ENCODE measurements at regions of chr3 and their contacts with region 1.

Region 1: GRCh38 chr3:169812332-169813235 is at the starts of genes LRRC34 and LRRIQ4:
- DNase-seq: peak; percentile 43 to 72 (median 52)
- ATAC-seq: peak; percentile 72
- H3K4me3 ChIP-seq: peak within 1 kb of the TSS; percentile 85
- H3K4me3 Mint-ChIP-seq: peak within 1 kb of the TSS; percentile 79 to 91 (median 86)
- H3K27ac ChIP-seq: peak within 1 kb of the TSS; percentile 59
- H3K27ac Mint-ChIP-seq: peak within 1 kb of the TSS; percentile 3 to 92 (median 71)
- H3K4me1 ChIP-seq: peaks cover 4 to 6% of the 10 kb centered on the region in 2 donors
- H3K4me1 Mint-ChIP-seq: peaks cover 21 to 40% (median 25%) of the 10 kb centered on the region in 7 donors
- H3K27me3 ChIP-seq: no peaks in the 10 kb centered on the region
- H3K27me3 Mint-ChIP-seq: peaks cover 0 to 18% (median 2%) of the 10 kb centered on the region in 5 donors
- total RNA-seq, gene LRRC34: 0.30 to 3.7 (median 0.42) TPM
- total RNA-seq, gene LRRIQ4: 0.12 TPM in 1 of 5 experiments, not detected in the others

Region 2: GRCh38 chr3:169420429-169420828 is 392.2 kb before region 1 on chr3:
- CTCF ChIA-PET with region 1: no interaction called
- POLR2A ChIA-PET with region 1: no interaction called
- intact Hi-C with region 1: no loop called
- DNase-seq: no peak
- ATAC-seq: no peak
- H3K4me3 ChIP-seq: no peak overlapping the region
- H3K4me3 Mint-ChIP-seq: no peak overlapping the region
- H3K27ac ChIP-seq: no peak overlapping the region
- H3K27ac Mint-ChIP-seq: no peak overlapping the region
- H3K4me1 ChIP-seq: no peaks in the 10 kb centered on the region
- H3K4me1 Mint-ChIP-seq: no peaks in the 10 kb centered on the region
- H3K27me3 ChIP-seq: no peaks in the 10 kb centered on the region
- H3K27me3 Mint-ChIP-seq: peaks cover 0 to 8% (median 0%) of the 10 kb centered on the region in 5 donors

Region 3: DNA sequence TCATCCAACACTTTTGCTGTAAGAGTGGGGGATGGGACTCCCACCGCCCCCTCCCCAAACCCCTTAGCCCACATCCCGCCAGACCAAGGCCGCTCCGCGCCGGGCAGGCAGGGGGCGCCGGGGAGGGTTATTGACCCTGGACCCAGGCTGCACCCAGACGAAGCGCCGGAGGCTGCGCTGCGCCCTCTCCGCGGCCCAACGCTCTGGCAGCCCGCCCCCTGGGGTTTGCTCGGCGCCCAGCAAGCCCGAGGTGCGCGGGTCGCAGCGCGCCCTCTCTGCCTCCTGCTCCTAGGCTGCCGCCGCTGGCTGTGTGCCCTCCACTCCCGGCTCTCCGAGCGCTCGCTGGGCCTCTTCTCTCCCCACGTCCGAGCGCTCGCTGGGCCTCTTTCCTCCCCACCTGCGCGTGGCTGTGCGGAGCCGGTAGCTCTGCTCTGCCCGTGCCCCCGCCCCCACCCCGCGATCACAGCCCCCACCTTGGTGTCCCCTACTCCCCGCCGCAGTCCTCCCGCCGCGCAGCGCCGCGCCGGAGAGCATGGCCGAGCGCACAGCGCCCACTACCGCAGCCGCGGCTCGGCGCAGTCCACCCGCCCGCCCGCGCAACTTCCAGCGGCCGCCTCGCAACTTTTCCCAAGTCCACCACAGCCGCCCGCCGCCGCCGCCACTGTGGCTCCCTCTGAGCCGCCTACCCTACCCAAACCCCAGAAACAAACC is 150.3 kb before region 1 on chr3:
- CTCF ChIA-PET with region 1: no interaction called
- POLR2A ChIA-PET with region 1: no interaction called
- intact Hi-C with region 1: loop called in 1 of 2 experiments (anchors 2 kb)
- DNase-seq: peak in 2 of 9 donors; percentile 29 to 50
- ATAC-seq: peak; percentile 69
- H3K4me3 ChIP-seq: peak overlapping the region; percentile 60
- H3K4me3 Mint-ChIP-seq: peak overlapping the region; percentile 78 to 92 (median 85)
- H3K27ac ChIP-seq: no peak overlapping the region
- H3K27ac Mint-ChIP-seq: no peak overlapping the region
- H3K4me1 ChIP-seq: peaks cover 18 to 33% of the 10 kb centered on the region in 2 donors
- H3K4me1 Mint-ChIP-seq: peaks cover 35 to 72% (median 45%) of the 10 kb centered on the region in 7 donors
- H3K27me3 ChIP-seq: peaks cover 20 to 84% of the 10 kb centered on the region in 2 donors
- H3K27me3 Mint-ChIP-seq: peaks cover 85 to 93% (median 88%) of the 10 kb centered on the region in 5 donors

Region 4: GRCh38 chr3:169790687-169791429 is 21.7 kb before region 1 on chr3:
- CTCF ChIA-PET with region 1: interaction called, 4 read pairs
- POLR2A ChIA-PET with region 1: no interaction called
- intact Hi-C with region 1: loop called in 1 of 2 experiments (anchors 2 kb)
- DNase-seq: no peak
- ATAC-seq: no peak
- H3K4me3 ChIP-seq: no peak overlapping the region
- H3K4me3 Mint-ChIP-seq: no peak overlapping the region
- H3K27ac ChIP-seq: no peak overlapping the region
- H3K27ac Mint-ChIP-seq: peak overlapping the region in 1 of 9 donors; percentile 50
- H3K4me1 ChIP-seq: no peaks in the 10 kb centered on the region
- H3K4me1 Mint-ChIP-seq: peaks cover 0 to 21% (median 0%) of the 10 kb centered on the region in 7 donors
- H3K27me3 ChIP-seq: no peaks in the 10 kb centered on the region
- H3K27me3 Mint-ChIP-seq: no peaks in the 10 kb centered on the region

Region 5: GRCh38 chr3:170180908-170181879 is 368.6 kb after region 1 on chr3 and contains the start of gene PHC3:
- CTCF ChIA-PET with region 1: no interaction called
- POLR2A ChIA-PET with region 1: interaction called, 3 read pairs
- intact Hi-C with region 1: loop called (anchors 2 kb)
- DNase-seq: peak; percentile 88 to 95 (median 92)
- ATAC-seq: peak; percentile 86
- H3K4me3 ChIP-seq: peak within 1 kb of the TSS; percentile 93
- H3K4me3 Mint-ChIP-seq: peak within 1 kb of the TSS; percentile 88 to 100 (median 99)
- H3K27ac ChIP-seq: peak within 1 kb of the TSS; percentile 98
- H3K27ac Mint-ChIP-seq: peak within 1 kb of the TSS; percentile 96 to 100 (median 100)
- H3K4me1 ChIP-seq: peaks cover 19 to 39% of the 10 kb centered on the region in 2 donors
- H3K4me1 Mint-ChIP-seq: peaks cover 19 to 40% (median 33%) of the 10 kb centered on the region in 7 donors
- H3K27me3 ChIP-seq: no peaks in the 10 kb centered on the region
- H3K27me3 Mint-ChIP-seq: peaks cover 0 to 2% (median 0%) of the 10 kb centered on the region in 5 donors
- total RNA-seq, gene PHC3: 78.9 to 215 (median 158) TPM

Region 6: GRCh38 chr3:170908235-170909116 is 1095.9 kb after region 1 on chr3 and contains the start of gene EIF5A2:
- CTCF ChIA-PET with region 1: no interaction called
- POLR2A ChIA-PET with region 1: no interaction called
- intact Hi-C with region 1: loop called in 1 of 2 experiments (anchors 1 kb)
- DNase-seq: peak; percentile 87 to 97 (median 94)
- ATAC-seq: peak; percentile 98
- H3K4me3 ChIP-seq: peak within 1 kb of the TSS; percentile 50
- H3K4me3 Mint-ChIP-seq: peak within 1 kb of the TSS; percentile 90 to 98 (median 96)
- H3K27ac ChIP-seq: peak within 1 kb of the TSS; percentile 68
- H3K27ac Mint-ChIP-seq: peak within 1 kb of the TSS; percentile 89 to 96 (median 94)
- H3K4me1 ChIP-seq: peaks cover 15 to 16% of the 10 kb centered on the region in 2 donors
- H3K4me1 Mint-ChIP-seq: peaks cover 0 to 31% (median 22%) of the 10 kb centered on the region in 7 donors
- H3K27me3 ChIP-seq: no peaks in the 10 kb centered on the region
- H3K27me3 Mint-ChIP-seq: peaks cover 0 to 19% (median 0%) of the 10 kb centered on the region in 5 donors
- total RNA-seq, gene EIF5A2: 5.5 to 9.8 (median 7.4) TPM